ENCODE measurements at regions of chr16 and their contacts with region 1.

Region 1: DNA sequence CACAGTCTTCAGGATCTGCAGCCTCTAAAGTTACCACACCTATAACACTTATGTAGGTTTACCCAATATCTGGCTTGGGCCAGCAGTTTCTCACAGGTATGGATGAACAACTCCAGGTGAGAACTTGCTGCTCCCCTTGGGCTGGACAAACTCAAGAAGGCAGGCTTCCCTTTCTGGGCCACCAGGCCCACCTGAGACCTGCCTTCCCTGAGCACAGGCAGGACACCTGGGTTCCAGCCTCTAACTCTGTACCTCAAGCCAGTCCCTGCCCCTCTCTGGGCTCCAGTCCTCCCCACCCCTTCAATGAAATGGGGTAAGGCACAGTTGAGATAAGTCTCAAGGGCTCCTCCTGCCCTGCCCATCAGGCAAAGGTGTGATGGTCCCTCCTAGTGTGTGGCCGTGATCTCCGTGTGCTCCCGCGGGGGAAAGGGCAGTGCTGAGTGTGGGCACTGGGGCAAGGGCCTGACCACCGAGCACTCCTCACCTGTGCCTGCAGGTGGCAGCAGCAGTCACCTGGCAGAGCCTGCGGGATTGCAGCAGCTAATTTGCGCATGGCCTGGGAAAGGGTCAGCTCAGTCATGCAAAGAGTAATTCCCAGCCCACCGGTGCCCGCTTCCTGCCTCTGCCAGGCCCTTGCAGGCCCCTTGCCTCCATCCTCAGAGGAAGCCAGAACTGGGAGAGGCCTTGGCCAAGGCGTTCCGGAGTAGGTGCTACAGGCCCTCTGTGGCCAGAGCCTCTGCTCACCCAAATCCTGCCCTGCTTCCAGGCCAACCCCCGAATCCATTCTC is 28.2 kb upstream of the ADGRG1 start:
- DNase-seq: peak; percentile 59 to 87
- H3K4me3 ChIP-seq: no peak overlapping the region
- H3K27ac ChIP-seq: no peak overlapping the region
- H3K4me1 ChIP-seq: no peaks in the 10 kb centered on the region; a peak in 1 of 7 replicates
- H3K27me3 ChIP-seq: no peaks in the 10 kb centered on the region; a peak in 1 of 7 replicates
- CTCF ChIP-seq: peak; percentile 95 to 100 (median 99)
- EP300 ChIP-seq: no peak
- POLR2A ChIP-seq: no peak
- RAD21 ChIP-seq: peak; percentile 81 to 86

Region 2: DNA sequence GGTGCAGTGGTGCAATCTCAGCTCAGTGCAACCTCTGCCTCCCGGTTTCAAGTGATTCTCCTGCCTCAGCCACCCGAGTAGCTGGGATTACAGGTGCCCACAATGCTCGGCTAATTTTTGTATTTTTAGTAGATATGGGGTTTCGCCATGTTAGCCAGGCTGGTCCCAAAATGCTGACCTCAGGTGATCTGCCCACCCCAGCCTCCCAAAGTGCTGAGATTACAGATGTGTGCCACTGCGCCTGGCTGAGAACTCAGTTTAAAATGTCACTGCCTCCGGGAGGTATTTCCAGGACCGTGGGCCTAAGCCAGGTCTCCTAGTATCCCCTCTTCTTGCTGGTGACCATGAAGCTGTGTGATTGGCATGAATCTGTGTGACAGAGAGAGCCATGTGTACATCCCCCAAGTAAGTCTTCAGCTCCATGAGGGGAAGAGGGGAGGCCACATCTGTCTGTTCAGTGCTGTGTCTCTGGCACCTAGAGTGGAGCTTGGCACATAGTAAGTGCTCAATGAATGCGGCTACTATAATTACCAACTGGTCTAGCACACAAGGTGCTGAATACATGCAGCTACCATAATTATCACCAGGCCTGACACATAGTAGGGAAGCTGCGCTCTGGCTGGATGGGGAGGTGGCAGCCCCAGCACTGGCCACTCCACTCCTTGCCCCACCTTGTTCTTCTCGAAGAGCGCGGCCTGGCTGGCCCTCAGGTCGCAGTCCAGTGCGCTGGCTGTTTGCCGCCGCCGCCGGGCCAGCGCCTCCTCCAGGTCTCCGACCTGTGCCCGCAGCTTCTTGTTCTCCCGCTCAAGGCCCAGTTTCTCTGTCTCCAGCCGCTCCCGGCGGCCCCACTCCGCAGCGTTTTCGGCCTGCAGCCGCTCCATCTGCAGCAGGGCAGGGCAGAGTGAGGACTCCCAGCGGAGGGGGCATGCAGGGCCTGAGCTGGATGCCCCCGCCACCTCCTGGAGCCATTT is 82.6 kb before region 1 on chr16:
- CTCF ChIA-PET with region 1: no interaction called
- POLR2A ChIA-PET with region 1: no interaction called
- DNase-seq: no peak
- H3K4me3 ChIP-seq: no peak overlapping the region
- H3K27ac ChIP-seq: no peak overlapping the region
- H3K4me1 ChIP-seq: peaks cover 0 to 3% (median 0%) of the 10 kb centered on the region in 4 experiments; a peak in 1 of 7 replicates
- H3K27me3 ChIP-seq: peaks cover 0 to 1% (median 0%) of the 10 kb centered on the region in 4 experiments; a peak in 2 of 7 replicates
- CTCF ChIP-seq: no peak
- EP300 ChIP-seq: no peak
- POLR2A ChIP-seq: no peak
- RAD21 ChIP-seq: no peak

Region 3: GRCh38 chr16:57544119-57544653 is 56.1 kb before region 1 on chr16:
- CTCF ChIA-PET with region 1: no interaction called
- POLR2A ChIA-PET with region 1: no interaction called
- DNase-seq: peak in 1 of 2 experiments; percentile 31
- H3K4me3 ChIP-seq: no peak overlapping the region
- H3K27ac ChIP-seq: no peak overlapping the region
- H3K4me1 ChIP-seq: peaks cover 0 to 2% (median under 1%) of the 10 kb centered on the region in 4 experiments; a peak in 2 of 7 replicates
- H3K27me3 ChIP-seq: peaks cover 0 to 5% (median 1%) of the 10 kb centered on the region in 4 experiments; a peak in 2 of 7 replicates
- CTCF ChIP-seq: no peak
- EP300 ChIP-seq: no peak
- POLR2A ChIP-seq: no peak
- RAD21 ChIP-seq: no peak

Region 4: GRCh38 chr16:57619832-57620636 is 19.8 kb after region 1 on chr16:
- CTCF ChIA-PET with region 1: interaction called, 79 read pairs
- POLR2A ChIA-PET with region 1: no interaction called
- DNase-seq: peak in 1 of 2 experiments; percentile 44
- H3K4me3 ChIP-seq: no peak overlapping the region
- H3K27ac ChIP-seq: no peak overlapping the region
- H3K4me1 ChIP-seq: peaks cover 0 to 29% (median 15%) of the 10 kb centered on the region in 4 experiments; a peak in 6 of 7 replicates
- H3K27me3 ChIP-seq: no peaks in the 10 kb centered on the region
- CTCF ChIP-seq: no peak
- EP300 ChIP-seq: no peak
- POLR2A ChIP-seq: no peak
- RAD21 ChIP-seq: no peak

Region 5: DNA sequence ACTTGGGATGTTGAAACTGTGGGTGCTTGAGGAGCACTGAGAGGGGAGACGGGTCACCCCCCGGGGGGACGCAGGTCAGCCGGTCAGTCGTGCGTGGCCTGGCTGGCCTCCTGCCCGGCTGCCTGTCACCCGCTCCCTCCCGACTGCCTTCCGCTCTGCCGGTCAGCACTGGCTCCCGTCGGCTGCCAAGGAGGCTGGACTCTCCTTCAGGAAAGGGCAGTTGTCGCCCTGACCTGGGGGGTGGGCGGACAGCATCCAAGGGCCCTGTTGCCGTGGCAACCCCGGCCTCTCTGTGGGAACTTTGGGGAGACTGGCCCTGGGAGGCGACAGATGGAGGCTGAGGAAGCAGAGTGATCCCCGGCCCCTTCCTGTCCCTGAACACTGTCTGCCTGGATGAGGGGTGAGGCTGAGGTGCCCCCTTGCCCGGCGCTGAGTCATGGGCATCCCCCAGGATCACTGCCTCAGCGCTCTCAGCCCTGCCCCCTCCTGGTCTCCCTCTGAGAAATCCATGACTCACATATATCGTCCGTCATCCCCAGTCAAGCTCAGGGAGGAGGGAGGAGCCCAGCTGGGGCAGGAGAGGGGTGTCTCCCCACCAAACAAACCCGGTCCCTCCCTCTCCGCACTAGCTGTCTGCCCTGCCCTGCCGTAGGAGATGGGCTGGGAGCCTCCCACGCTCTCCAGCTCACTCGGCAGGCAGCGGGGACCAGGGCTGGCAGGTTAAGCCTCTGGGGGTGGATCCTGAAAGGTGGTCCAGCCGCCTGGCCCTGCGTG is 28.0 kb after region 1 on chr16 and contains the start of gene ADGRG1:
- CTCF ChIA-PET with region 1: interaction called, 79 read pairs
- POLR2A ChIA-PET with region 1: interaction called, 4 read pairs
- DNase-seq: peak; percentile 65 to 72
- H3K4me3 ChIP-seq: peak within 1 kb of the TSS in 1 of 4 experiments; percentile 49; a peak in 2 of 8 replicates
- H3K27ac ChIP-seq: no peak within 1 kb of the TSS
- H3K4me1 ChIP-seq: peaks cover 0 to 21% (median 15%) of the 10 kb centered on the region in 4 experiments; a peak in 6 of 7 replicates
- H3K27me3 ChIP-seq: peaks cover 0 to 2% (median 0%) of the 10 kb centered on the region in 4 experiments; a peak in 2 of 7 replicates
- CTCF ChIP-seq: peak; percentile 15 to 38 (median 26); a peak in 3 of 4 replicates
- EP300 ChIP-seq: no peak
- POLR2A ChIP-seq: no peak
- RAD21 ChIP-seq: peak in 1 of 2 experiments; percentile 21; a peak in 1 of 4 replicates
- total RNA-seq, gene ADGRG1: 0.78 and 1.3 TPM in 2 replicates

Region 6: GRCh38 chr16:57634171-57634570 is 33.9 kb after region 1 on chr16:
- CTCF ChIA-PET with region 1: interaction called, 43 read pairs
- POLR2A ChIA-PET with region 1: interaction called, 3 read pairs
- DNase-seq: no peak
- H3K4me3 ChIP-seq: no peak overlapping the region
- H3K27ac ChIP-seq: no peak overlapping the region
- H3K4me1 ChIP-seq: peaks cover 0 to 5% (median 0%) of the 10 kb centered on the region in 4 experiments; a peak in 2 of 7 replicates
- H3K27me3 ChIP-seq: no peaks in the 10 kb centered on the region; a peak in 3 of 7 replicates
- CTCF ChIP-seq: no peak
- EP300 ChIP-seq: no peak
- POLR2A ChIP-seq: no peak
- RAD21 ChIP-seq: no peak

Region 7: GRCh38 chr16:57639172-57639887 is 39.1 kb after region 1 on chr16:
- CTCF ChIA-PET with region 1: interaction called, 43 read pairs
- POLR2A ChIA-PET with region 1: interaction called, 3 read pairs
- DNase-seq: peak in 1 of 2 experiments; percentile 84
- H3K4me3 ChIP-seq: peak overlapping the region in 1 of 4 experiments; percentile 18; a peak in 2 of 8 replicates
- H3K27ac ChIP-seq: no peak overlapping the region
- H3K4me1 ChIP-seq: peaks cover 0 to 3% (median 1%) of the 10 kb centered on the region in 4 experiments; a peak in 4 of 7 replicates
- H3K27me3 ChIP-seq: peaks cover 0 to 6% (median 4%) of the 10 kb centered on the region in 4 experiments; a peak in 5 of 7 replicates
- CTCF ChIP-seq: no peak
- EP300 ChIP-seq: no peak
- POLR2A ChIP-seq: no peak
- RAD21 ChIP-seq: no peak